ENCODE measurements at regions of chr9 and their contacts with region 1.

Region 1: GRCh38 chr9:88388172-88388885 is at the start of gene SPIN1:
- DNase-seq: peak; percentile 73
- H3K4me3 Mint-ChIP-seq: peak within 1 kb of the TSS; percentile 99
- H3K27ac Mint-ChIP-seq: peak within 1 kb of the TSS; percentile 94
- H3K4me1 Mint-ChIP-seq: peaks cover 26% of the 10 kb centered on the region
- H3K27me3 Mint-ChIP-seq: no peaks in the 10 kb centered on the region
- CTCF ChIP-seq: peak; percentile 45
- total RNA-seq, gene SPIN1: 75.1 and 80.9 TPM in 2 replicates

Region 2: GRCh38 chr9:87973730-87974292 is 414.5 kb before region 1 on chr9:
- CTCF ChIA-PET with region 1: interaction called, 3 read pairs
- POLR2A ChIA-PET with region 1: interaction called, 10 read pairs
- intact Hi-C with region 1: loop called (anchors 2 kb)
- DNase-seq: no peak
- H3K4me3 Mint-ChIP-seq: peak overlapping the region; percentile 88
- H3K27ac Mint-ChIP-seq: peak overlapping the region; percentile 93
- H3K4me1 Mint-ChIP-seq: peaks cover 14% of the 10 kb centered on the region
- H3K27me3 Mint-ChIP-seq: no peaks in the 10 kb centered on the region
- CTCF ChIP-seq: no peak

Region 3: GRCh38 chr9:88106491-88106890 is 281.8 kb before region 1 on chr9:
- CTCF ChIA-PET with region 1: interaction called, 5 read pairs
- POLR2A ChIA-PET with region 1: interaction called, 4 read pairs
- intact Hi-C with region 1: loop called (anchors 1 kb)
- DNase-seq: peak; percentile 54
- H3K4me3 Mint-ChIP-seq: no peak overlapping the region
- H3K27ac Mint-ChIP-seq: no peak overlapping the region
- H3K4me1 Mint-ChIP-seq: no peaks in the 10 kb centered on the region
- H3K27me3 Mint-ChIP-seq: peaks cover 10% of the 10 kb centered on the region
- CTCF ChIP-seq: peak; percentile 51

Region 4: DNA sequence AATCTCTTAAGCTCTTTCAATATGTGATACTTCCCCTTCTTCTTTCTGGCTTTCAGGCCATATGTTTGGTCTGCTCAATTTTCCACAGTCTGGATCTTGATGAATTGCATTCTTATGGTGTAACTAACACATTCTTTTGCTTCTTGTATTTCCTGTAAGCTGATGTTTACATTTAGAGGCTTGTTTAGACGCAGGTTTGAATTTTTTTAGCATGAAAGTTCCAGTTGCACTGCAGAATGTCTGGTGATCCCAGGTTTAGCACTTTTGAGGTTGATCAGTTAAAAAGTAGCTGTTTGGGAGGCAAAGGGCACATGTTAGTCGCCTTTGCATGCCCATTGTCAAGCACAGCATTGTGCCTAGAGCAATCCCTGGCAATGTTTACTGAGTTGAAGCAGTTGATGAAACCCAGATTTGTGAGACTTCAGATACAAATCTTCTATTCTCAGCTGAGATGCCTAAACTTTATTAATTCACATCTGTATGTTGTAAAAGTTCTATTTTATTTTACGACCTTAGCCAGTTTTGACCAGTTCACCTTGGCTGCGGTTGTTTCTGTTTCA is 190.5 kb before region 1 on chr9:
- CTCF ChIA-PET with region 1: no interaction called
- POLR2A ChIA-PET with region 1: no interaction called
- intact Hi-C with region 1: loop called (anchors 2 kb)
- DNase-seq: peak; percentile 45
- H3K4me3 Mint-ChIP-seq: peak overlapping the region; percentile 70
- H3K27ac Mint-ChIP-seq: peak overlapping the region; percentile 73
- H3K4me1 Mint-ChIP-seq: peaks cover 15% of the 10 kb centered on the region
- H3K27me3 Mint-ChIP-seq: no peaks in the 10 kb centered on the region
- CTCF ChIP-seq: no peak

Region 5: DNA sequence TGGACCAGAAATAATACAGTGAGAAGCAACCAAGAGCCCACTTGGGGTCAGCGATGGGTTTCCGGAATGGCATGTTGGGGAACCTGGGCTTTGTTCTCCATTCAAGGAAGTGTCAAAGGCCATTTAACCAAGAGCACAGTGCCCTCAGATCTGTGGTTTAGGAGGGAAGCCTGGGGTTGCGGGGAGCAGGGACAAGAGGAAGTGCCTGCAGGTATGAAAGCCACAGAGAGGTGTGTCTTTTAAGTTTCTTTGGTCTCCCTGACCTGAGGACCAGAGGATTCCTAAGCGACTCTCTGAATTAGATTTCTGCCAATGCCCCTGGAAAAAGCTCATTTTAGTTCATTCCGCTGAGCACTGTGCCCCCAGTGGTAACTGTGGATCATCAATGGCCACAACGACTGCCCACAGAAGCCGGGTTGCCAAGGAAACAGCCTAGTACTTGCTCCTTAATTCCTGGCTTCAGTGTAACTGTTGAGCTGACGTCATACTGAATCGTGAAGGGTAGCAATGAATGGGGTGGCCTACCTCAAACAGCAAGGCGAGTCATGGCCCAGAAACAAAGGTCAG is 107.4 kb before region 1 on chr9:
- CTCF ChIA-PET with region 1: no interaction called
- POLR2A ChIA-PET with region 1: no interaction called
- intact Hi-C with region 1: no loop called
- DNase-seq: no peak
- H3K4me3 Mint-ChIP-seq: no peak overlapping the region
- H3K27ac Mint-ChIP-seq: no peak overlapping the region
- H3K4me1 Mint-ChIP-seq: no peaks in the 10 kb centered on the region
- H3K27me3 Mint-ChIP-seq: no peaks in the 10 kb centered on the region
- CTCF ChIP-seq: no peak

Region 6: DNA sequence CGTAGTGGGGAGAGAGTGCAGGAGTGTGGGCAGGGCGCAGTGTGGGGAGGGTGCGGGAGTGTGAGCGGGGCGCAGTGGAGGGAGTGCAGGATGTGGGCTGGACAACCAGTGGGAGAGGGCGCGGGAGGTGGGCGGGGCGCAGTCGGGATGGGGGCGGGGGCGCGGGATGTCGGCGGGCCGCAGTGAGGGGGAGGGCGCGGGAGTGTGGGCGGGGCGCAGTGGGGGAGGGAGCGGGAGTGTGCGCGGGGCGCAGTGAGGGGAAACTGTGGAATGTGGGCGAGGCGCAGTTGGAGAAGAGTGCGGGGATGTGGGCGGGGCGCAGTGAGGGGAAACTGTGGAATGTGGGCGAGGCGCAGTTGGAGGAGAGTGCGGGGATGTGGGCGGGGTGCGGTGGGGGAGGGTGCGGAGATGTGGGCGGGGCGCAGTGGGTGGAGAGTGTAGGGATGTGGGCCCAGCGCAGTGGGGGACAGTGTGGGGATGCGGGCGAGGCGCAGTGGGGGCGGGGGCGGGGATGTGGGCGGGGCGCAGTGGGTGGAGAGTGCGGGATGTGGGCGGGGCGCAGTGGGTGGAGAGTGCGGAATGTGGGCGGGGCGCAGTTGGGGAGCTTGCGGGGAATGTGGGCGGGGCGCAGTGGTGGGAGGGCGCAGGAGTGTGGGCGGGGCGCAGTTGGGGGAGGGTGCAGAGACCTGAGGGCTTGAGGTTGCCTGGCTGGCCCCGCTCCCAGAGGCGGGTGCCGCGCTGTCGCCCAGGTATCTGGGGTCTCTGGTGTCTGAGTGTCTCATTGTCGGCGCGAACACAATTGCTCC is 146.3 kb after region 1 on chr9 and contains the start of gene NXNL2:
- CTCF ChIA-PET with region 1: no interaction called
- POLR2A ChIA-PET with region 1: no interaction called
- intact Hi-C with region 1: loop called (anchors 2 kb)
- DNase-seq: peak; percentile 85
- H3K4me3 Mint-ChIP-seq: peak within 1 kb of the TSS; percentile 69
- H3K27ac Mint-ChIP-seq: peak within 1 kb of the TSS; percentile 24
- H3K4me1 Mint-ChIP-seq: peaks cover 25% of the 10 kb centered on the region
- H3K27me3 Mint-ChIP-seq: no peaks in the 10 kb centered on the region
- CTCF ChIP-seq: no peak
- total RNA-seq, gene NXNL2: 0.49 and 0.66 TPM in 2 replicates